IMR-90 (cell line): ENCODE measurements at regions of chr5 and their contacts with region 1.

Region 1: GRCh38 chr5:177194274-177194673 is 60.7 kb downstream of the NSD1 start:
- DNase-seq: peak; percentile 94
- ATAC-seq: peak; percentile 94
- H3K4me3 ChIP-seq: no peak overlapping the region
- H3K27ac ChIP-seq: no peak overlapping the region
- H3K4me1 ChIP-seq: peaks cover 5% of the 10 kb centered on the region
- H3K27me3 ChIP-seq: no peaks in the 10 kb centered on the region
- CTCF ChIP-seq: no peak
- POLR2A ChIP-seq: no peak
- RAD21 ChIP-seq: no peak

Region 2: GRCh38 chr5:177154003-177154643 is 40.2 kb before region 1 on chr5:
- CTCF ChIA-PET with region 1: no interaction called
- POLR2A ChIA-PET with region 1: no interaction called
- dilution Hi-C with region 1: no loop called
- in situ Hi-C with region 1: no loop called
- intact Hi-C with region 1: loop called (anchors 5 kb)
- DNase-seq: peak; percentile 36
- ATAC-seq: peak; percentile 93
- H3K4me3 ChIP-seq: no peak overlapping the region
- H3K27ac ChIP-seq: peak overlapping the region; percentile 68; the same call in 1 of the 2 replicates
- H3K4me1 ChIP-seq: peaks cover 2% of the 10 kb centered on the region
- H3K27me3 ChIP-seq: no peaks in the 10 kb centered on the region
- CTCF ChIP-seq: no peak
- POLR2A ChIP-seq: no peak
- RAD21 ChIP-seq: no peak

Region 3: GRCh38 chr5:177232761-177233160 is 38.5 kb after region 1 on chr5:
- CTCF ChIA-PET with region 1: no interaction called
- POLR2A ChIA-PET with region 1: no interaction called
- dilution Hi-C with region 1: no loop called
- in situ Hi-C with region 1: no loop called
- intact Hi-C with region 1: loop called (anchors 5 kb)
- DNase-seq: peak; percentile 72
- ATAC-seq: peak; percentile 94
- H3K4me3 ChIP-seq: no peak overlapping the region
- H3K27ac ChIP-seq: peak overlapping the region; percentile 27; the same call in 1 of the 2 replicates
- H3K4me1 ChIP-seq: peaks cover 14% of the 10 kb centered on the region
- H3K27me3 ChIP-seq: no peaks in the 10 kb centered on the region
- CTCF ChIP-seq: no peak
- POLR2A ChIP-seq: no peak
- RAD21 ChIP-seq: no peak

Region 4: GRCh38 chr5:177241768-177242167 is 47.5 kb after region 1 on chr5:
- CTCF ChIA-PET with region 1: no interaction called
- POLR2A ChIA-PET with region 1: no interaction called
- dilution Hi-C with region 1: no loop called
- in situ Hi-C with region 1: no loop called
- intact Hi-C with region 1: loop called (anchors 5 kb)
- DNase-seq: peak; percentile 62
- ATAC-seq: peak; percentile 78
- H3K4me3 ChIP-seq: no peak overlapping the region
- H3K27ac ChIP-seq: no peak overlapping the region
- H3K4me1 ChIP-seq: peaks cover 5% of the 10 kb centered on the region; the same call in 1 of the 2 replicates
- H3K27me3 ChIP-seq: no peaks in the 10 kb centered on the region
- CTCF ChIP-seq: no peak
- POLR2A ChIP-seq: no peak
- RAD21 ChIP-seq: no peak